Posterior vena cava (tissue), 2 donors: ENCODE measurements at regions of chr11 and their contacts with region 1.

Region 1: DNA sequence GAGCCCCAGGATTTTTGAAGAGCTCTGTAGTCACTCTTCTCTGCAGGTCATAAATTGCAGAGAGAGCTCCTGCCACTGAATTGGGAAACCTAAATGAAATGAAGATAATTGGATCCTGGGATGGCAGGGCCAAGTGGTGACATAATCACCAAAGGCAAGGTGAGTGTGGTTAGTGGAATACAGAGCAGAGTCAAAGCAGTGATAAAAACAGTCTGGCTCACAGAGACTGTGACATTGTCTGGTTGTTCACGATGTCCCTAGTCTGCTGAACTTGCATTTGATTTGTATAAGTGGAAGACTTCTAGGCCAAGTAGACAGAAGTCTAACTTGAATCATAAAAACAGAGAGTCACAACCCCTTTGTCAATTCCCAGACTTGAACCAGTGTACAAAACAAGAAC is 26.8 kb upstream of the SPATA19 start:
- DNase-seq: no peak

Region 2: GRCh38 chr11:134531327-134532130 is 659.4 kb after region 1 on chr11:
- intact Hi-C with region 1: loop called in 1 of 2 experiments (anchors 10 kb)
- DNase-seq: peak; percentile 73